ENCODE measurements at regions of chr5 and their contacts with region 1.

Region 1: DNA sequence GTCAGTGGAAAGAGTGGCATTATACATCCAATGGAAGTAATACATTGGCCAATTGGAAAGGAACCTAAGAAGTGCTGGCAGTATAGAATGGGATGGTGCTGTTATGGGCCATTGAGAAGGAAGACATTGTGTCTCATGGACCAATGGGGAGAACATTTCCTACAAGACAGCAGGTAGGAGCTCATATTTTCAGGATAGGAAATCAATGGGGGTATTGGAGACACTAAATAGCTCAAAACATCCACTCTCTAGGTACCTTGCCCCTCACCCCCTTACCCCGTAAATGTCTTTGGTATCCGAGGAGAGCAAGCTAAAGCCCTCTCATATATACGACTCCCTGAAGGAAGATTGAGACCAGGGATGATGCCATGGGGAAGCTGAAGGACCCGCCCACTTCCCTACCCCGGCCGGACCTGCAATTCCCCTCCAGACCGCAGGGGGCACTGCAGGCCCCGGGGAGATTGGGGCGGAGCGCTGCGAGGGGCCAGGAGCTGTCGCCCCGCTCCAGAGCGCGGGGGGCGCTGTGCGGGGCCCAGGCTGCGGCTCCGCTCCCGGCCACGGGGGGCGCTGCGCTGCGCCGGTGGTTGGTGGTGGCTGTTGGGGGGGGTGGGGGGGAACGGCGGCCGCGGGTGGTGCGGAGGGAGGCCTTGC is at the start of gene KDM3B:
- DNase-seq: peak; percentile 23
- H3K4me3 ChIP-seq: peak within 1 kb of the TSS; percentile 81
- H3K27ac ChIP-seq: peak within 1 kb of the TSS; percentile 85
- H3K27me3 ChIP-seq: no peaks in the 10 kb centered on the region
- CTCF ChIP-seq: peak; percentile 98
- polyA plus RNA-seq, gene KDM3B: 28.3 and 32.7 TPM in 2 replicates

Region 2: GRCh38 chr5:138213161-138214029 is 138.8 kb before region 1 on chr5 and contains the start of gene CDC23:
- CTCF ChIA-PET with region 1: interaction called, 19 read pairs
- POLR2A ChIA-PET with region 1: interaction called, 4 read pairs
- DNase-seq: peak; percentile 91
- H3K4me3 ChIP-seq: peak within 1 kb of the TSS; percentile 98
- H3K27ac ChIP-seq: peak within 1 kb of the TSS; percentile 77
- H3K27me3 ChIP-seq: no peaks in the 10 kb centered on the region
- CTCF ChIP-seq: no peak
- polyA plus RNA-seq, gene CDC23: 30.4 and 38.1 TPM in 2 replicates

Region 3: DNA sequence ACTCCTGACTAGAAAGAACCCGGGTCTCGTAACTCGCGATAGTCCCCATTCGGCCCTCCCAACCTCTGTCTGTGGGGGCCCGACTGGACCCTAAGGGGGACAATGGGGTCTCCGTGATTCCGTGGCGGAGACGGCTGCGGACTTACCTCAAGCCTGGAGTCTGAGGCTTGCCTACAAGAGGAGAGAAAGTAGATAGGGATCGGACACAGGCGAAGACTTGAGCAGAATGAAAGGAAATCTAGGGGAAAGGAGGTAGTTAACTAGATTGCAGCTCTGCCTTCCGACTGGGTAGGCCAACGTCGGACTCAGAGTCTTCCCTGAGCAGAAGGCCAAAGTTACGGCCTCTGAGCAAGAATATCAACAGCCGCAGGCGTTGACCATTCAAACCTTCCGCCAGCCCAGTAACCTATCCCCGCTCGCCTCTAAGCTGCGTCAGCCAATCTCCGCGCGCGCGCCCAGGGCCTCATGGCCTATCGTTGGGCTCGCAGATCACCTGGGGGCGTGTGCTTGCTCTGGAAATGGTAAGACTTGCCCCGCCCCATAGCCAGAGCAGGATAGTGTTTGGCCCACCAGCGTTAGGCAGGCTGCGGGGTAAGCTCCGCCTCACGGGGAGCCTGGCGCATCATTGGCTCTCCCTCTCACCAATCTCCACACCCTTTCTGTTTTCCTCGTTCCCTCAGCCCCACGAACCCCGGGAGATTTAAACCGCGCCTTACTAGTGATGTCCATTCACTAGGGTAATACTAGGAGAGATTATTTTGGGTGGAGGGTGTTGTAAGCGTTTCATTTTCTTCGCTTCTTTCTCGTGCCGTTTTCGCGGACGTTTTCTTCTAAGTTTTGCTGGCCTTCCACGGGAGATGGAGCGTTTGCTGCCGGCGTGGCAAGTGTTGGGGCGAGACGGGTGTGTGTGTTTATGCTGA is 20.5 kb before region 1 on chr5 and contains the start of gene CDC25C:
- CTCF ChIA-PET with region 1: interaction called, 169 read pairs
- POLR2A ChIA-PET with region 1: interaction called, 14 read pairs
- DNase-seq: peak; percentile 99
- H3K4me3 ChIP-seq: peak within 1 kb of the TSS; percentile 87
- H3K27ac ChIP-seq: peak within 1 kb of the TSS; percentile 52
- H3K27me3 ChIP-seq: no peaks in the 10 kb centered on the region
- CTCF ChIP-seq: no peak
- polyA plus RNA-seq, gene CDC25C: 3.2 and 4.8 TPM in 2 replicates

Region 4: DNA sequence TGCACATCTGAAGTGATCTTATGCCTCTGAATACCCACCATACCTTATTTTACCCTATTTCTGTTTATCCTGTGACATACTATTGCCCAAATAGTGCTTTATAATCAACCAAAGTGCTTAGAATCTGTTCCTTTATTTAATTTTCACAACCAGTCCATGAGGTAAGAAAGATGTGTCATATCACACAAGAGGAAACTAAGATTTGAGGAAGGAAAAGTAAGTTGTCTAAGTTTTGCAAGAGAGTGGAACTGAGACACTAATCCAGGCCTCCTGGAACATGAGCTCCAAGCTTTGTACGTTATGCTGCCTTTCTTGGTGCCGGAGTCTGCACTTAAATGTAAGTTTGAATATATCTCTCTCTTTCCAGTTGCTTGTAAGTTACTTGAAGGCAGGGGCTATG is 17.5 kb after region 1 on chr5:
- CTCF ChIA-PET with region 1: interaction called, 100 read pairs
- POLR2A ChIA-PET with region 1: interaction called, 5 read pairs
- DNase-seq: no peak
- H3K4me3 ChIP-seq: no peak overlapping the region
- H3K27ac ChIP-seq: no peak overlapping the region
- H3K27me3 ChIP-seq: no peaks in the 10 kb centered on the region
- CTCF ChIP-seq: no peak

Region 5: GRCh38 chr5:138391859-138392386 is 39.7 kb after region 1 on chr5:
- CTCF ChIA-PET with region 1: interaction called, 20 read pairs
- POLR2A ChIA-PET with region 1: no interaction called
- DNase-seq: no peak
- H3K4me3 ChIP-seq: no peak overlapping the region
- H3K27ac ChIP-seq: no peak overlapping the region
- H3K27me3 ChIP-seq: no peaks in the 10 kb centered on the region
- CTCF ChIP-seq: no peak

Region 6: DNA sequence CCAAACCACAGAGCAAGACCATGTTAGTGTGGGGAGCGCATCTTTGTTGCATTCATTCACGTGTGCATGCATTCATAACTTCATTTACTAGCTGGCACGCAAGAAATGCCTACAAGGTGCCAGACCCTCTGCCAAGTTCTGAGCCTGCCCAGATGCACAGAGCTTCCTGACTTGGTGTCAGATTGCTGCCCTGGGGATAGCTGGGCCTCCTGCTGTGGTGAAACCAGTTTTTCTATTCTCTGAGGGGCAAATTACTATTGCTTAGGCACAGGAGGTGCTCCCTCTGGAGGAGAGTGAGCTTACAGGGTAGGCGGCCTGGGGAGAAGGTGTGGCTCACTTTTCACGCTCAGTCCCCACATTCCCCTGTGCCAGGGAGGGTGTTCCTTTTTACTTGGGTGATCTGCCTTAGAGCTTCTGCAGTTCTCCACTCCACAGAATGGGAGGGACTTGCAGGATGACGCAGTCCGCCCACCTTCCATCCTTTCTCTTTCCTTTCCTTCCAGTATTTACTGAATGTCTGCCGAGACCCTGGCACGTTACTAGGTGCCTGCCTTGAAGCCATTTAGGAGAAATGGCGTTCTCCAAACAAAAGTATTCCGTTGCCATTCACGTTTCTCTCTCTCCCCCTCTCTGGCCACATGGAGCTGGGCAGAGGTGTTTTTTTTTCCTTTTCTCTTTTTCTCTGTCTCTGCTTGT is 373.1 kb after region 1 on chr5:
- CTCF ChIA-PET with region 1: no interaction called
- POLR2A ChIA-PET with region 1: no interaction called
- DNase-seq: peak; percentile 4
- H3K4me3 ChIP-seq: no peak overlapping the region
- H3K27ac ChIP-seq: no peak overlapping the region
- H3K27me3 ChIP-seq: peaks cover 16% of the 10 kb centered on the region
- CTCF ChIP-seq: peak; percentile 44